Common myeloid progenitor, CD34-positive (primary cell): ENCODE measurements at regions of chr16 and their contacts with region 1.

Region 1: GRCh38 chr16:81940781-81941560 is 70.3 kb downstream of the SDR42E1 start:
- DNase-seq: peak; percentile 45 to 74 (median 74)
- H3K4me3 ChIP-seq: no peak overlapping the region
- H3K27ac ChIP-seq: no peak overlapping the region
- H3K4me1 ChIP-seq: no peaks in the 10 kb centered on the region
- H3K27me3 ChIP-seq: no peaks in the 10 kb centered on the region

Region 2: GRCh38 chr16:81928975-81929374 is 12.0 kb before region 1 on chr16:
- CTCF ChIA-PET with region 1: interaction called, 14 read pairs
- POLR2A ChIA-PET with region 1: interaction called, 3 read pairs
- DNase-seq: no peak
- H3K4me3 ChIP-seq: no peak overlapping the region
- H3K27ac ChIP-seq: no peak overlapping the region
- H3K4me1 ChIP-seq: no peaks in the 10 kb centered on the region
- H3K27me3 ChIP-seq: no peaks in the 10 kb centered on the region

Region 3: DNA sequence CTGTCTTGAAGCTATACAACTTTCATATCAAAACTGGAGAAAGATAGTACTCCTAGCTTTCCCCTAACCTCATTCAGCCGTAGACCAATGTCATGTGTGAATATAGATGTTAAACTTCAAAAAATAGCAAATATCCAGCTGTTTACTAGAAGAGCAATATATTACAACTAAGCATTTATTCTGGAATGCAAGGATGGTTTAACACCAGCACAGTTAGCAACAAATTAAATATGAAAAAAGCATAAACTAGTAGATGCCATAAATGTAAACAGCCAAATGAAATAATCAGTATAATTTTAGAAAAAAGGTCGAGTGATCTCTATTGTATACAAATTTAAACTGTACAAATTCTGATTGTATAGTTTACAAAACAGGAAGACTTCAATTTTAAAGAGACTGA is 10.6 kb after region 1 on chr16:
- CTCF ChIA-PET with region 1: interaction called, 11 read pairs
- POLR2A ChIA-PET with region 1: no interaction called
- DNase-seq: peak in 2 of 3 donors; percentile 9 to 18
- H3K4me3 ChIP-seq: no peak overlapping the region
- H3K27ac ChIP-seq: no peak overlapping the region
- H3K4me1 ChIP-seq: peaks cover 0 to 7% (median 1%) of the 10 kb centered on the region in 4 experiments
- H3K27me3 ChIP-seq: no peaks in the 10 kb centered on the region

Region 4: GRCh38 chr16:82061861-82062525 is 121.0 kb after region 1 on chr16:
- CTCF ChIA-PET with region 1: interaction called, 18 read pairs
- POLR2A ChIA-PET with region 1: no interaction called
- DNase-seq: peak; percentile 16 to 47 (median 45)
- H3K4me3 ChIP-seq: no peak overlapping the region
- H3K27ac ChIP-seq: no peak overlapping the region
- H3K4me1 ChIP-seq: no peaks in the 10 kb centered on the region
- H3K27me3 ChIP-seq: peaks cover 0 to 8% (median 2%) of the 10 kb centered on the region in 5 experiments

Region 5: GRCh38 chr16:82229796-82230619 is 289.0 kb after region 1 on chr16:
- CTCF ChIA-PET with region 1: interaction called, 19 read pairs
- POLR2A ChIA-PET with region 1: no interaction called
- DNase-seq: peak; percentile 38 to 58 (median 44)
- H3K4me3 ChIP-seq: no peak overlapping the region
- H3K27ac ChIP-seq: no peak overlapping the region
- H3K4me1 ChIP-seq: no peaks in the 10 kb centered on the region
- H3K27me3 ChIP-seq: peaks cover 0 to 6% (median 0%) of the 10 kb centered on the region in 5 experiments